Activated CD4-positive, alpha-beta memory T cell treated with anti-CD3 and anti-CD28 coated beads for 36 hours (primary cell): ENCODE measurements at regions of chr17 and their contacts with region 1.

Region 1: DNA sequence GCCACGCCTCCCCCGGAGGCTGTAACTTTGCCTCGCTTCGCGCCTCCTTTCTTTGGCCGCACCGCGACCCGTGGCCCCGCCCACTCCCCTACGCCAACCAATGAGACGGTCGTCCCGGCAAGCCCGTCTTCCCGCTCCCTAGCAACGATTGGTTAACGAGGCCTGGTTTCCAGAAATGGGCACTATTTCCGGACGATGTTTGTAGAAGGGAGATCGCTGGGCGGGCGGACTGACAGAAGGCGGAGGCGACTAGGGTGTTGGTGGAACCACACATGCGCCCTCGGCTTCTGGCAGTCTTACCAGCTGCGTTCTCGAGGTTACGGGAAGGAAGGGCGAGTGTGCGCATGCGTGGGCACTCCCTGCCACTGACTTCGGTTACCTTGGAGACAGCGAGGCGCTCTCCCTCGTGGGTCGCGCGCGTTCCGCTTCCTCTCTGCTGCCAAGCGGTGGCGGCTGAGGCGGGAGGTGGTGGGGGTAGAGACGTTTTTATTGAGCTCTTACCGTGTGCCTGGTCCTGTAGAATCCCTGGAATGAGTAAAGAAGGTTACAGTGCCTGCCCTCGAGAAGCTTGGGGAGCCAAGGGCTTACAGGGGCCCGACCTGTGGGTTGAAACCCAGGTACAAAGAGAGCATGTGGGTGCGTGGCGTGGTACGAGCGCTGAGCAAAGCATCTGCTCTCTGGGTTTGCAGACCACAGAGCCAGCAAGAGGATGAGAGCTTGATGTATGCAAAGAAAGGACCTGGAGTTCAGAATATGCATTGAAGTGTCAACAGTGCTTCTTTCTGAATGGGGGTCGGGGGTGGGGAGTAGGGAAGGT is 500 bp upstream of the MAP3K14 start:
- DNase-seq: peak; percentile 100
- H3K4me3 Mint-ChIP-seq: peak overlapping the region; percentile 81
- H3K27ac Mint-ChIP-seq: peak overlapping the region; percentile 89
- H3K4me1 Mint-ChIP-seq: peaks cover 65% of the 10 kb centered on the region
- H3K27me3 Mint-ChIP-seq: no peaks in the 10 kb centered on the region

Region 2: DNA sequence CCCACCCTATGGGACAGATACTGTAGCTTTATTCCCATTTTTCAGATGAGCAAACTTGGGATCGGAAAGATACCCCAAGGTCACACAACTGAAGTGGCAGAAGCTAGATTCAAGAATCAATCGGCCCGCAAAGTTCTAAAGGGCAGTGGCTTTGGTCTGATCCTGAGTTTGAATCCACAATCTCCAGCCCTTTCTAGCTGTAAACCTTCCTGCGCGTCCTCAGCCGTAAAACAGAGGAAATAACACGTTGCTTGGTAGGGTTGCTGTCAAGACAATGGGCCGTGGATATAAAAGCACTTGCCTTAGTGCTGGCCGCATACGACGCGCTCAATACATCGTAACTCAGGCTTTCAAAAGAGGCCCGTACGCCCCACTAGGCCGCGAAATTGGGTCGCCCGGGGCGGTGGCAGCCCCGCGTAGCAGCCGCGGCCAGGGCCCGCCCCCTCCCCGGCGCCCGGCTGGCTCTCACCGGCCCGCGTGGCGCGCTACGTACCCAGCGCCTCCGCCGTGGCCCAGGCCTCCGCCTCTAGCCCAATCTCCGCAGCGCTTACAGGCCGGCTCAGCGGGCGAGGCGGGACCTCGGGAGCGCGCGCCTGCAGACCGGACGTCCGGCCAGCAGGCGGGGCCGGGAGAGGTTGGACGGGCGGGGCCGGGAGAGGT is 266.1 kb before region 1 on chr17 and contains the start of gene DCAKD:
- CTCF ChIA-PET with region 1: no interaction called
- POLR2A ChIA-PET with region 1: no interaction called
- intact Hi-C with region 1: loop called (anchors 2 kb)
- DNase-seq: peak; percentile 95
- H3K4me3 Mint-ChIP-seq: peak within 1 kb of the TSS; percentile 93
- H3K27ac Mint-ChIP-seq: peak within 1 kb of the TSS; percentile 94
- H3K4me1 Mint-ChIP-seq: peaks cover 45% of the 10 kb centered on the region
- H3K27me3 Mint-ChIP-seq: no peaks in the 10 kb centered on the region
- total RNA-seq, gene DCAKD: 32.0 to 34.0 TPM

Region 3: GRCh38 chr17:45177563-45178169 is 139.7 kb before region 1 on chr17:
- CTCF ChIA-PET with region 1: no interaction called
- POLR2A ChIA-PET with region 1: no interaction called
- intact Hi-C with region 1: no loop called
- DNase-seq: no peak
- H3K4me3 Mint-ChIP-seq: no peak overlapping the region
- H3K27ac Mint-ChIP-seq: no peak overlapping the region
- H3K4me1 Mint-ChIP-seq: peaks cover 6% of the 10 kb centered on the region
- H3K27me3 Mint-ChIP-seq: no peaks in the 10 kb centered on the region

Region 4: GRCh38 chr17:45228763-45229539 is 88.4 kb before region 1 on chr17:
- CTCF ChIA-PET with region 1: interaction called, 10 read pairs
- POLR2A ChIA-PET with region 1: interaction called, 74 read pairs
- intact Hi-C with region 1: loop called (anchors 1 kb)
- DNase-seq: peak; percentile 96
- H3K4me3 Mint-ChIP-seq: peak overlapping the region; percentile 100
- H3K27ac Mint-ChIP-seq: peak overlapping the region; percentile 100
- H3K4me1 Mint-ChIP-seq: peaks cover 86% of the 10 kb centered on the region
- H3K27me3 Mint-ChIP-seq: no peaks in the 10 kb centered on the region

Region 5: DNA sequence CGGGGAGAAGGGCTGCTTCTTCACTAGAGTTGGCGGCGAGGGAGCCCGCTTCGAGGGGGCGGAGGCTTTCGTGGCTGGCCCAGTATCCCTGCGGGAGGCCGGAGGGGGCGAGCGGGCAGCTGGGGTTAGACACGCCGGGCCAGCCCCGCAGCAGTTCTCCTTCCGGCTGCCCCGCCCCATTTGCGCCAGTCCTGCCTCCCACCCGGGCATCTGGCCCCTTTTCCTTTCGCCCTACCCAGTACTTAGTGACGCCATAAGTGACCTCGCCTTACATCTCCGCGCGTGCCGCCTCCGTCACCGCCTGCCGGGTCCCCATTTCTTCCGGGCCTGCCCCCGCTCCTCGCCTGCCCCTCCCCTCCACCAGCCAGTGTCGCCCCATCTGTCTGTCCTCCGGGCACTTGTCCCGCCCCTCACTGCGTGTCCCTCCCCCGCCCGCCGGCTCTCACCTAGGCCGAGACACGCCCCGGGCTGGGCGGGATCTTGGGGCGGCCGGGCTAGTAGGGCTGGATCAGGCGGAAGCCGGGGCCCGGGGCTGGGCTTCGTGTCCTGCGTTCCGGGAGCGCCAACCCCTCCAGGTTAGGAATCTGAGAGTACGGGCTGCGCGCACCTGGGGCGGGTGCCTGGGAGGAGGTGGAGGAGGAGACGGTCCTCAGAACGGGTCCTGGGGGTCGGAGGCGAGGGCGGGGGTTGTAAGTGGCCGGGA is 69.7 kb before region 1 on chr17:
- CTCF ChIA-PET with region 1: interaction called, 3 read pairs
- POLR2A ChIA-PET with region 1: interaction called, 9 read pairs
- intact Hi-C with region 1: loop called (anchors 1 kb)
- DNase-seq: peak; percentile 99
- H3K4me3 Mint-ChIP-seq: peak overlapping the region; percentile 86
- H3K27ac Mint-ChIP-seq: peak overlapping the region; percentile 94
- H3K4me1 Mint-ChIP-seq: peaks cover 59% of the 10 kb centered on the region
- H3K27me3 Mint-ChIP-seq: no peaks in the 10 kb centered on the region

Region 6: GRCh38 chr17:45357364-45357997 is 40.2 kb after region 1 on chr17:
- CTCF ChIA-PET with region 1: interaction called, 8 read pairs
- POLR2A ChIA-PET with region 1: interaction called, 12 read pairs
- intact Hi-C with region 1: loop called (anchors 1 kb)
- DNase-seq: no peak
- H3K4me3 Mint-ChIP-seq: no peak overlapping the region
- H3K27ac Mint-ChIP-seq: no peak overlapping the region
- H3K4me1 Mint-ChIP-seq: peaks cover 32% of the 10 kb centered on the region
- H3K27me3 Mint-ChIP-seq: peaks cover 7% of the 10 kb centered on the region

Region 7: GRCh38 chr17:45428050-45428617 is 110.8 kb after region 1 on chr17:
- CTCF ChIA-PET with region 1: no interaction called
- POLR2A ChIA-PET with region 1: no interaction called
- intact Hi-C with region 1: no loop called
- DNase-seq: peak; percentile 87
- H3K4me3 Mint-ChIP-seq: peak overlapping the region; percentile 40
- H3K27ac Mint-ChIP-seq: no peak overlapping the region
- H3K4me1 Mint-ChIP-seq: peaks cover 21% of the 10 kb centered on the region
- H3K27me3 Mint-ChIP-seq: no peaks in the 10 kb centered on the region